ENCODE measurements at regions of chr5 and their contacts with region 1.

Region 1: GRCh38 chr5:111063700-111064322 is 7.7 kb upstream of the TSLP start:
- DNase-seq: peak; percentile 93
- ATAC-seq: peak; percentile 83
- H3K4me3 ChIP-seq: no peak overlapping the region
- H3K27ac ChIP-seq: peak overlapping the region; percentile 28; the same call in 1 of the 2 replicates
- H3K4me1 ChIP-seq: peaks cover 33% of the 10 kb centered on the region
- H3K27me3 ChIP-seq: no peaks in the 10 kb centered on the region
- CTCF ChIP-seq: peak; percentile 95

Region 2: GRCh38 chr5:110785326-110785725 is 278.5 kb before region 1 on chr5:
- CTCF ChIA-PET with region 1: no interaction called
- POLR2A ChIA-PET with region 1: no interaction called
- intact Hi-C with region 1: loop called (anchors 1 kb)
- DNase-seq: peak; percentile 96
- ATAC-seq: peak; percentile 93
- H3K4me3 ChIP-seq: peak overlapping the region; percentile 3; the same call in 1 of the 2 replicates
- H3K27ac ChIP-seq: peak overlapping the region; percentile 92
- H3K4me1 ChIP-seq: peaks cover 22% of the 10 kb centered on the region
- H3K27me3 ChIP-seq: no peaks in the 10 kb centered on the region
- CTCF ChIP-seq: no peak

Region 3: GRCh38 chr5:110852053-110852452 is 211.8 kb before region 1 on chr5:
- CTCF ChIA-PET with region 1: no interaction called
- POLR2A ChIA-PET with region 1: no interaction called
- intact Hi-C with region 1: loop called (anchors 5 kb)
- DNase-seq: no peak
- ATAC-seq: no peak
- H3K4me3 ChIP-seq: no peak overlapping the region
- H3K27ac ChIP-seq: no peak overlapping the region
- H3K4me1 ChIP-seq: peaks cover 22% of the 10 kb centered on the region
- H3K27me3 ChIP-seq: no peaks in the 10 kb centered on the region
- CTCF ChIP-seq: no peak

Region 4: GRCh38 chr5:110880413-110880812 is 183.4 kb before region 1 on chr5:
- CTCF ChIA-PET with region 1: no interaction called
- POLR2A ChIA-PET with region 1: no interaction called
- intact Hi-C with region 1: loop called (anchors 5 kb)
- DNase-seq: peak; percentile 99
- ATAC-seq: peak; percentile 80
- H3K4me3 ChIP-seq: no peak overlapping the region
- H3K27ac ChIP-seq: peak overlapping the region; percentile 87
- H3K4me1 ChIP-seq: peaks cover 29% of the 10 kb centered on the region
- H3K27me3 ChIP-seq: no peaks in the 10 kb centered on the region
- CTCF ChIP-seq: no peak

Region 5: DNA sequence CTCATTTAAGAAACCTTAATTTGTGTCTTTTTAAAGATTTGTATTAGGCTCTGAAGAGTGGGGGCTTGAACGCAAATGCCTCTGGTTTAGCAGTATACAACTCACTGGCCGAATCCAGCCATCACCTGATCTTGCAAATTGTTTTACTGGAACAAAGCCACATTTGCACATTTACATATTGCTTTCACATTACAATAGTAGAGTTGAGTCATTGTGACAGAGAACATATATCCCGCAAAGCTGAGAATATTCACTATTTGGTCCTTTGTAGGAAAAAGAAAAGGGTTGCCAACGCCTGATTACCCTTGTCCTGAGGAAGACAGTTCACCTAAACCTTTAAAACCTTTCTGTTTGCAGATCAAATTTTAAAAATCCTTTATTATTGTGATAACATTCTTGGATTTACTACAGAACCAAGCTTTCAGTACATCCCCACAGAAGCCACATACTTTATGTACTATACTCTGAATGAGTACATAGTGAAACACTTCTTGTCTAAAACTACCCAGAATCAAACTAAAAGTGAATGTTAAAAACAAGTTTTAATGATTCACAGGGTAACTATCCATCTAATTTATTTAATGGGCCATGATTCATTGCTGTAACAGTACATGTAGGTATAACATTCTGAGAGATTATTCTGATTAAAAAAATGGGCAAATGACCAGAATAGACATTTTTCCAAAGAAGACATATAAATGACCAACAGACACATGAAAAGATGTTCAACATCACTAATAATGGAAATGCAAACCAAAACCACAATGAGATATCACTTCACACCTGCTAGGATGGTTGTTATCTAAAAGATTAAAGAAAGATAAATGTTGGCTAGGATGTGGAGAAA is 164.0 kb before region 1 on chr5:
- CTCF ChIA-PET with region 1: no interaction called
- POLR2A ChIA-PET with region 1: no interaction called
- intact Hi-C with region 1: loop called (anchors 1 kb)
- DNase-seq: peak; percentile 92
- ATAC-seq: peak; percentile 72
- H3K4me3 ChIP-seq: peak overlapping the region; percentile 22; the same call in 1 of the 2 replicates
- H3K27ac ChIP-seq: peak overlapping the region; percentile 96
- H3K4me1 ChIP-seq: peaks cover 39% of the 10 kb centered on the region
- H3K27me3 ChIP-seq: no peaks in the 10 kb centered on the region
- CTCF ChIP-seq: no peak

Region 6: GRCh38 chr5:110951373-110951791 is 112.4 kb before region 1 on chr5:
- CTCF ChIA-PET with region 1: no interaction called
- POLR2A ChIA-PET with region 1: no interaction called
- intact Hi-C with region 1: loop called (anchors 1 kb)
- DNase-seq: peak; percentile 77
- ATAC-seq: peak; percentile 73
- H3K4me3 ChIP-seq: no peak overlapping the region
- H3K27ac ChIP-seq: peak overlapping the region; percentile 79
- H3K4me1 ChIP-seq: peaks cover 24% of the 10 kb centered on the region
- H3K27me3 ChIP-seq: no peaks in the 10 kb centered on the region
- CTCF ChIP-seq: no peak

Region 7: GRCh38 chr5:111075520-111075919 is 11.7 kb after region 1 on chr5:
- CTCF ChIA-PET with region 1: no interaction called
- POLR2A ChIA-PET with region 1: no interaction called
- intact Hi-C with region 1: no loop called
- DNase-seq: peak; percentile 87
- ATAC-seq: peak; percentile 90
- H3K4me3 ChIP-seq: no peak overlapping the region
- H3K27ac ChIP-seq: no peak overlapping the region
- H3K4me1 ChIP-seq: peaks cover 15% of the 10 kb centered on the region
- H3K27me3 ChIP-seq: no peaks in the 10 kb centered on the region
- CTCF ChIP-seq: no peak

Region 8: GRCh38 chr5:111223101-111223888 is 159.5 kb after region 1 on chr5:
- CTCF ChIA-PET with region 1: no interaction called
- POLR2A ChIA-PET with region 1: no interaction called
- intact Hi-C with region 1: no loop called
- DNase-seq: peak; percentile 33
- ATAC-seq: peak; percentile 3
- H3K4me3 ChIP-seq: peak overlapping the region; percentile 55; the same call in 1 of the 2 replicates
- H3K27ac ChIP-seq: no peak overlapping the region
- H3K4me1 ChIP-seq: peaks cover 9% of the 10 kb centered on the region; the same call in 1 of the 2 replicates
- H3K27me3 ChIP-seq: peaks cover 75% of the 10 kb centered on the region
- CTCF ChIP-seq: no peak

Measured in PC-3 (cell line).